ENCODE measurements at regions of chr2 and their contacts with region 1.

Region 1: GRCh38 chr2:20231632-20232031 is 6.7 kb upstream of the SDC1 start:
- DNase-seq: peak; percentile 99
- H3K4me3 Mint-ChIP-seq: peak overlapping the region; percentile 43
- H3K27ac Mint-ChIP-seq: peak overlapping the region; percentile 81
- H3K4me1 Mint-ChIP-seq: peaks cover 46% of the 10 kb centered on the region
- H3K27me3 Mint-ChIP-seq: no peaks in the 10 kb centered on the region
- CTCF ChIP-seq: no peak

Region 2: DNA sequence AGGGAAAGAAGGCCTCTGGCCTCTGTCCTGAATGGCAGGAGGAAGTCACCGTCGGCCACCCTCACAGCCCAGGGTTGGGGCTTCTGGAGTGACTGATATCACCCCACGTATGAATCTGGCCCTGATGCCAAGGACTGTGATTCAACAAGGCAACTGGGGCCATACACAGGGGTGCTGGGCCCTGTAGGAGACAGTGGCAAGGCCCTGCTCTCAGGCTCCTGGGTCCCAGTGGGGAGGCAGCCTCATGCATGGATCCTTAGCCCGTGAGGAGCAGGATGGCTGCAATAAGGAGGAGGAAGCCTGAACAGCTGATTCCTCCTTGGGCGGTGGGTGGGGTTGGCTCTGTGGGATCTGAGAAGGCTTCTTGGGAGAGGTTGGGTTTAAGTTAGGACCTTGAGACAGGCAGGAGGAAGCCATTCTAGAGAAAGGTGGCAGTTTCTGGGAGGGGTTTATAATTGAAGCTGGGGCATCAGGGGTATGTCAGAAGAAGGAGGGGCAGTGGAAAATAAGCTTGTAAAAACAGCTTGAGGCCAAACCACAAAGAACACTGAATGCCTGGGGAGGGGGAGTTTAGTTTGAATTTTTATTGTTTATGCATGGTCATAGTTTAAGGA is 137.4 kb before region 1 on chr2:
- CTCF ChIA-PET with region 1: no interaction called
- POLR2A ChIA-PET with region 1: no interaction called
- intact Hi-C with region 1: no loop called
- DNase-seq: no peak
- H3K4me3 Mint-ChIP-seq: no peak overlapping the region
- H3K27ac Mint-ChIP-seq: peak overlapping the region; percentile 75
- H3K4me1 Mint-ChIP-seq: peaks cover 47% of the 10 kb centered on the region
- H3K27me3 Mint-ChIP-seq: no peaks in the 10 kb centered on the region
- CTCF ChIP-seq: no peak

Region 3: GRCh38 chr2:20207051-20207450 is 24.6 kb before region 1 on chr2:
- CTCF ChIA-PET with region 1: interaction called, 32 read pairs
- POLR2A ChIA-PET with region 1: interaction called, 222 read pairs
- intact Hi-C with region 1: no loop called
- DNase-seq: no peak
- H3K4me3 Mint-ChIP-seq: no peak overlapping the region
- H3K27ac Mint-ChIP-seq: peak overlapping the region; percentile 94
- H3K4me1 Mint-ChIP-seq: peaks cover 48% of the 10 kb centered on the region
- H3K27me3 Mint-ChIP-seq: no peaks in the 10 kb centered on the region
- CTCF ChIP-seq: no peak

Region 4: DNA sequence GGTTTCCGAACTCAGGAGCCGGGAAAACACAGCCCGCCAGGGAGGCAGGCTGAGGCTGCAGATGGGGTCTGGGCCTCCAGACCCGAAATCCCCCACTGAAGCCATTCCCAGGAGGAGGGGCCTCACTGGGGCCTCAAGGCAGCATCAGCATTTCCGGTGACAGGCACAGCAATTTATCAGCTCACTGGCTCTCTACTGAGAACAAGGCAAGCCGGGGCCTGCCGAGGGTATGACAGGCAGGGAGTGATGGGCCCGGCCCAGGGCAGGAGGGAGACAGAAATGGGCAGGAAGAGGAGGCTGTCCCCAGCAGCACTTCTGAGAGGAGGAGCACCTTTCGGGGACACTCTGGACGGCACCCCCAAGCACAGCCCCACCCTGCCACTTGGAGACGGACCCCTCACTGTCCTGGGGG is 19.2 kb before region 1 on chr2:
- CTCF ChIA-PET with region 1: interaction called, 23 read pairs
- POLR2A ChIA-PET with region 1: interaction called, 222 read pairs
- intact Hi-C with region 1: no loop called
- DNase-seq: peak; percentile 90
- H3K4me3 Mint-ChIP-seq: peak overlapping the region; percentile 59
- H3K27ac Mint-ChIP-seq: peak overlapping the region; percentile 88
- H3K4me1 Mint-ChIP-seq: peaks cover 73% of the 10 kb centered on the region
- H3K27me3 Mint-ChIP-seq: no peaks in the 10 kb centered on the region
- CTCF ChIP-seq: no peak

Region 5: DNA sequence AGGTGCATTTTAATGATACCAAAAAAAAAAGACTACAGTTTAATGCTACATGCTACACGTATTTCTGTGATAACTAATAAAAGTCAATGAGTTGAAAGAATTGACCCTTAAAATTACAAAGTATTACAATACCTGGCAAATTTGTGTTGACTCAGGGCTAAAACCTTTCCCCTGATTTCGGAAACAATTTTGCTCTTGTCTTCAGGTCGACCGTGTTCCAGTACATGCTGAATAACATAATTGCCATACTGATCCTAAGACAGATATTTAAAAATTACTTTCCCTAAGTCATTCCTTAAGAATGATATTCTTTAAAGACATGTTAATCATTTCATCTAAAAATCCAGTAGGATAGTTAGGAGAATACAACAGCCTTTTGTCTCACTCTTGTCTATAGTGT is 23.1 kb after region 1 on chr2:
- CTCF ChIA-PET with region 1: no interaction called
- POLR2A ChIA-PET with region 1: no interaction called
- intact Hi-C with region 1: no loop called
- DNase-seq: no peak
- H3K4me3 Mint-ChIP-seq: no peak overlapping the region
- H3K27ac Mint-ChIP-seq: no peak overlapping the region
- H3K4me1 Mint-ChIP-seq: no peaks in the 10 kb centered on the region
- H3K27me3 Mint-ChIP-seq: no peaks in the 10 kb centered on the region
- CTCF ChIP-seq: no peak

Region 6: GRCh38 chr2:20561701-20562454 is 330.2 kb after region 1 on chr2:
- CTCF ChIA-PET with region 1: no interaction called
- POLR2A ChIA-PET with region 1: no interaction called
- intact Hi-C with region 1: no loop called
- DNase-seq: peak; percentile 72
- H3K4me3 Mint-ChIP-seq: no peak overlapping the region
- H3K27ac Mint-ChIP-seq: no peak overlapping the region
- H3K4me1 Mint-ChIP-seq: peaks cover 17% of the 10 kb centered on the region
- H3K27me3 Mint-ChIP-seq: no peaks in the 10 kb centered on the region
- CTCF ChIP-seq: no peak